ENCODE measurements at regions of chr9 and their contacts with region 1.

Region 1: DNA sequence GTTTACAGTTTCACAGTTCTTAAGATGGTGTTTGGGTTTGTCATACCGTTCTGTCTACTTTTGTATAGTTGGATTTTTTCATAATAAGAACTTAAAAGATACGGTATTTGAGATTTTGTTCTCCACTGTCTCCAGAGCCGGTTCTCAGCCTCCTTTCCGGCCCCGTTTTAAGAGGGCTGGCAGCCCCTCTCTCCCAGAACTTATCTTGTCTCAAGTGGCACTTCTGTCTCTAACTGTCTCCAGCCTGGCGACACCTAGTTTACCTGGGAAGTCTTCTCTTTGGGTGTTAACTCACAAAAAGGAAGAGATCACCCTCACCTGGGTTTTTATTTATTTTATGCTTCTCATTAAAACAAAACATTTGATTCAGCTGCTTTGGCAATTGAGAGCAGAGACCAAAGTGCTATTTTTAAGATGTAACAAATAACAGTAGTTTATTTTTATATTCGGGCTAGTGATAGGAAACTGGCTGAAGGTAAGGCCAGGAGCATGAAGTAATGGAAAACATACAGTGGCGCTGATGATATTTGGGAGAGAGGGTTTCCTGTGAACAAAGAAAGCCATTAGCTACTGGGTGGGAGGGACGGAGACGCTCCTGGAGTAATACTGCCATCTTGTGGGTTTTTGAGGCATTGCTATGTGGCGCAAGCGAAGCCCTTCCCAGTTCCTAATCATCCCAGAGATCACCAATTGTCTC is 48.3 kb downstream of the ACER2 start:
- DNase-seq: peak; percentile 72
- H3K4me3 Mint-ChIP-seq: no peak overlapping the region
- H3K27ac Mint-ChIP-seq: peak overlapping the region; percentile 2
- H3K4me1 Mint-ChIP-seq: peaks cover 5% of the 10 kb centered on the region
- H3K27me3 Mint-ChIP-seq: no peaks in the 10 kb centered on the region

Region 2: GRCh38 chr9:17810728-17811571 is 1646.2 kb before region 1 on chr9:
- CTCF ChIA-PET with region 1: interaction called, 7 read pairs
- POLR2A ChIA-PET with region 1: no interaction called
- intact Hi-C with region 1: loop called (anchors 10 kb)
- DNase-seq: peak; percentile 44
- H3K4me3 Mint-ChIP-seq: no peak overlapping the region
- H3K27ac Mint-ChIP-seq: no peak overlapping the region
- H3K4me1 Mint-ChIP-seq: no peaks in the 10 kb centered on the region
- H3K27me3 Mint-ChIP-seq: peaks cover 4% of the 10 kb centered on the region

Region 3: DNA sequence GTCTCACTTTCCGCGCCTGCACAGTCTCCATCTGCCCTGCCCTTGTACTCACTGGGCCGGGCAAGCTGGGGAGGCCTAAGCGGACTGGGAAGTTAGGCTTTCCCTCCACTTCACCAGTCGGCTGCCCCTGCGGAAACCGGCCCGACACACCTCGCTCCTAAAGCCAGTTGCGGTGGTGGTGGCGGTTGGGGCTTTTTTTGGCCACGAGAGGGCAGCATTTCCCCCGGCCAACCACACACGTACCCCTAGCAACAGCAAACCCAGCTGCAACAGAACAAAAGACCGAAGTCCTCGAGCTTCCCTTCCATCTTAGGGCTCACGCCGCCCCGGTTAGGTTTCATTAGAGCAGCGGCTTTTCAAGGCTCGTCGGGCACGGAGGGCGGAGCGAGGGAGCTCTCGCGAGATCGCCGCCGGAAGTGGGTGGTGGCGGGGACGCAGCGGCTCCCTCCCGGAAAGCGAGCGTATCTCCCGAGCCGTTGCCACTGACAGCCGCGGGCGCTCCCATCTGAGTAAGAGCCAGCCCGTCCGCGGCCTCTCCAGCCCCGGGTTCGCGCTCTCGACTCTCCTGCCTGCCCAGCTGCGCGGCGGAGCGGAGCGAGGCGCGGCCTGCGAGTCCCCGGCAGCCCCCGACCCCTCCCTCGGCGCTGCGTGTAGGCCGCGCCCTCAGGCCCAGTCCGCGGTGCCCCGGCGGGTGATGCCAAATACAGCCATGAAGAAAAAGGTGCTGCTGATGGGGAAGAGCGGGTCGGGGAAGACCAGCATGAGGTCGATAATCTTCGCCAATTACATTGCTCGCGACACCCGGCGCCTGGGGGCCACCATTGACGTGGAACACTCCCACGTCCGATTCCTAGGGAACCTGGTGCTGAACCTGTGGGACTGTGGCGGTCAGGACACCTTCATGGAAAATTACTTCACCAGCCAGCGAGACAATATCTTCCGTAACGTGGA is 407.9 kb before region 1 on chr9 and contains the start of gene RRAGA:
- CTCF ChIA-PET with region 1: interaction called, 43 read pairs
- POLR2A ChIA-PET with region 1: no interaction called
- intact Hi-C with region 1: loop called (anchors 1 kb)
- DNase-seq: peak; percentile 96
- H3K4me3 Mint-ChIP-seq: peak within 1 kb of the TSS; percentile 93
- H3K27ac Mint-ChIP-seq: peak within 1 kb of the TSS; percentile 98
- H3K4me1 Mint-ChIP-seq: peaks cover 37% of the 10 kb centered on the region
- H3K27me3 Mint-ChIP-seq: no peaks in the 10 kb centered on the region
- total RNA-seq, gene RRAGA: 43.8 to 45.5 TPM

Region 4: GRCh38 chr9:19102631-19103345 is 354.4 kb before region 1 on chr9 and contains the start of gene HAUS6:
- CTCF ChIA-PET with region 1: interaction called, 3 read pairs
- POLR2A ChIA-PET with region 1: no interaction called
- intact Hi-C with region 1: loop called (anchors 1 kb)
- DNase-seq: peak; percentile 97
- H3K4me3 Mint-ChIP-seq: peak within 1 kb of the TSS; percentile 95
- H3K27ac Mint-ChIP-seq: peak within 1 kb of the TSS; percentile 93
- H3K4me1 Mint-ChIP-seq: peaks cover 22% of the 10 kb centered on the region
- H3K27me3 Mint-ChIP-seq: no peaks in the 10 kb centered on the region
- total RNA-seq, gene HAUS6: 28.7 to 29.8 TPM

Region 5: GRCh38 chr9:19184144-19184917 is 272.8 kb before region 1 on chr9:
- CTCF ChIA-PET with region 1: interaction called, 4 read pairs
- POLR2A ChIA-PET with region 1: no interaction called
- intact Hi-C with region 1: loop called (anchors 1 kb)
- DNase-seq: peak; percentile 91
- H3K4me3 Mint-ChIP-seq: peak overlapping the region; percentile 68
- H3K27ac Mint-ChIP-seq: peak overlapping the region; percentile 87
- H3K4me1 Mint-ChIP-seq: peaks cover 28% of the 10 kb centered on the region
- H3K27me3 Mint-ChIP-seq: no peaks in the 10 kb centered on the region

Region 6: DNA sequence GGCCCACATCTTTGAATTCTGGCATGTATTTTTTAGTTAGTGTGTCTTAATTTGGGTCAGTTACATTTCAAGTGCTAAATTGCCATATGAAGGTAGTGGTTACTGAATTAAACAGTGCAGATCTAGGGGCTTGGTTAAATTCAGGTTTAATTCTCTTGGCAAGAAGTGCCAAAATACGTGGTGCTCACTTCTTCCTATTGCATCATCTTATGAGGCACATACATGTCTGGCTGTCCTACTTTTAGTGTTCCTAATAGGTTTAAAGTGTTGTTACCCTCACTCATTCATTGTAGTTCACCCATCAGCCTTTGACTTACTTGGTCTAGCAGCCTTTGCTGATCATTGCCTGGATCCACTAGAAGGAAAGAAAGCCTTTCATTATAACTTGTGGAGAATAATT is 136.6 kb before region 1 on chr9:
- CTCF ChIA-PET with region 1: no interaction called
- POLR2A ChIA-PET with region 1: no interaction called
- intact Hi-C with region 1: no loop called
- DNase-seq: no peak
- H3K4me3 Mint-ChIP-seq: no peak overlapping the region
- H3K27ac Mint-ChIP-seq: no peak overlapping the region
- H3K4me1 Mint-ChIP-seq: peaks cover 3% of the 10 kb centered on the region
- H3K27me3 Mint-ChIP-seq: no peaks in the 10 kb centered on the region

Region 7: DNA sequence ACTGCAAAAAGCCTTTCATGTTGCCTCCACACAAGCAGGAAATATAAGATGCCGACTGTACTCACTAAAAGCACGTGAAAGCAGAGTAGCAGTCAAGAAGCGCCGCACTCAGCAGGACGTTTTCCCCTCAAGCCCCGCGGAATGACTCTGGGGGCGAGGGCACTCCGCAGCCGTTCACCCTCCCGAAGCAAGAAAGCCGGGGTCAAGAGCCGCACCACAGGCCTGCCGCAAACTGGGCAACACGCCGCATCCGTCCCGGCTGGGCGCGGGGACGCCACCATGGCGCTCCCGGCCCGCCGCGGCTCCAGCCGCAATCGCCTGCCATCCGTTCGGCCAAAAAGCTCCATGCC is 77.5 kb before region 1 on chr9:
- CTCF ChIA-PET with region 1: interaction called, 8 read pairs
- POLR2A ChIA-PET with region 1: interaction called, 4 read pairs
- intact Hi-C with region 1: loop called (anchors 1 kb)
- DNase-seq: no peak
- H3K4me3 Mint-ChIP-seq: peak overlapping the region; percentile 100
- H3K27ac Mint-ChIP-seq: peak overlapping the region; percentile 100
- H3K4me1 Mint-ChIP-seq: peaks cover 50% of the 10 kb centered on the region
- H3K27me3 Mint-ChIP-seq: peaks cover 3% of the 10 kb centered on the region

Region 8: GRCh38 chr9:19471737-19472648 is 14.8 kb after region 1 on chr9:
- CTCF ChIA-PET with region 1: interaction called, 12 read pairs
- POLR2A ChIA-PET with region 1: no interaction called
- intact Hi-C with region 1: no loop called
- DNase-seq: peak; percentile 80
- H3K4me3 Mint-ChIP-seq: peak overlapping the region; percentile 42
- H3K27ac Mint-ChIP-seq: no peak overlapping the region
- H3K4me1 Mint-ChIP-seq: peaks cover 16% of the 10 kb centered on the region
- H3K27me3 Mint-ChIP-seq: peaks cover 6% of the 10 kb centered on the region

Measured in activated CD4-positive, alpha-beta memory T cell treated with anti-CD3 and anti-CD28 coated beads for 36 hours (primary cell).